Heart left ventricle (tissue), 16 donors: ENCODE measurements at regions of chr17 and their contacts with region 1.

Region 1: DNA sequence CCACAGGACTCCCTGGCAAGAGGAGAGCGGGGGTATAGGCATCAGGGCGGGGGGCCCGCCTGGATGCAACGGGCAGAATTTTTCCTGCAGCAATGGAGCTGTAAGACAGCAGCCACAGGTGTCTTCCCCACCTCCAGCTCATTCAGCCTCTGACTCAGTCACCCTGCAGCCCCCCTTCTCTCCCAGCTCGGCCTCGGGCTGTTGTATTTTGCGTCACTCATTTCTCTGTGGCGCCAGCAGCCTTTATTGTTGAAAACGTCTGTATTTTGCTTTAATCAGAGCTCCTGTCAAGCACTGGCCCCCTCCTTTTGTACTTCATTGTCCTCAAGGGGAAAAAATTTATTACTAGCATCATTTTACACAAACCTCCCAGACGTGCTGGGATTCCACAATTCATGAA is 117.7 kb downstream of the WSCD1 start:
- DNase-seq: no peak
- ATAC-seq: no peak
- H3K4me3 ChIP-seq: no peak overlapping the region
- H3K27ac ChIP-seq: no peak overlapping the region
- H3K4me1 ChIP-seq: no peaks in the 10 kb centered on the region
- H3K27me3 ChIP-seq: peaks cover 0 to 12% (median 0%) of the 10 kb centered on the region in 9 donors
- CTCF ChIP-seq: no peak
- POLR2A ChIP-seq: no peak

Region 2: DNA sequence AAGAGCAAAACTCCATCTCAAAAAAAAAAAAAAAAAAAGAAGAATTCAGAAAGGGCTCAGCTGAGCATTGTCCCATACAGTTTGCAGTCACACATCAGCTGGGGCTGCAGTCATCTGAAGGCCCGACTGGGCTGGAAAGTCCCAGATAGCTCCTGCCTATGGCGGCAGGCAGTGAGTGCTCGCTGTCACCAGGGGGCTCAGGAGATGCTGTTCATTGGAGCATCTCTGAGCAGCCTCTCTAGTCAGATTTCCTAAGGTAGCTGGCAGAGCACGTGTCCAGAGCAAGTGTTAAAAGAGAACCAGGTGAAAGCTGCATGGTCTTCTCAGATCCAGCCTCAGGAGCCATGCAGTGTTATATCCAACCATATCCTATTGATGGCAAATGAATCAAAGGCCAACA is 41.9 kb before region 1 on chr17:
- intact Hi-C with region 1: loop called in 1 of 10 experiments (anchors 10 kb)
- DNase-seq: no peak
- ATAC-seq: no peak
- H3K4me3 ChIP-seq: no peak overlapping the region
- H3K27ac ChIP-seq: no peak overlapping the region
- H3K4me1 ChIP-seq: no peaks in the 10 kb centered on the region
- H3K27me3 ChIP-seq: peaks cover 0 to 4% (median 0%) of the 10 kb centered on the region in 9 donors
- CTCF ChIP-seq: no peak
- POLR2A ChIP-seq: no peak

Region 3: DNA sequence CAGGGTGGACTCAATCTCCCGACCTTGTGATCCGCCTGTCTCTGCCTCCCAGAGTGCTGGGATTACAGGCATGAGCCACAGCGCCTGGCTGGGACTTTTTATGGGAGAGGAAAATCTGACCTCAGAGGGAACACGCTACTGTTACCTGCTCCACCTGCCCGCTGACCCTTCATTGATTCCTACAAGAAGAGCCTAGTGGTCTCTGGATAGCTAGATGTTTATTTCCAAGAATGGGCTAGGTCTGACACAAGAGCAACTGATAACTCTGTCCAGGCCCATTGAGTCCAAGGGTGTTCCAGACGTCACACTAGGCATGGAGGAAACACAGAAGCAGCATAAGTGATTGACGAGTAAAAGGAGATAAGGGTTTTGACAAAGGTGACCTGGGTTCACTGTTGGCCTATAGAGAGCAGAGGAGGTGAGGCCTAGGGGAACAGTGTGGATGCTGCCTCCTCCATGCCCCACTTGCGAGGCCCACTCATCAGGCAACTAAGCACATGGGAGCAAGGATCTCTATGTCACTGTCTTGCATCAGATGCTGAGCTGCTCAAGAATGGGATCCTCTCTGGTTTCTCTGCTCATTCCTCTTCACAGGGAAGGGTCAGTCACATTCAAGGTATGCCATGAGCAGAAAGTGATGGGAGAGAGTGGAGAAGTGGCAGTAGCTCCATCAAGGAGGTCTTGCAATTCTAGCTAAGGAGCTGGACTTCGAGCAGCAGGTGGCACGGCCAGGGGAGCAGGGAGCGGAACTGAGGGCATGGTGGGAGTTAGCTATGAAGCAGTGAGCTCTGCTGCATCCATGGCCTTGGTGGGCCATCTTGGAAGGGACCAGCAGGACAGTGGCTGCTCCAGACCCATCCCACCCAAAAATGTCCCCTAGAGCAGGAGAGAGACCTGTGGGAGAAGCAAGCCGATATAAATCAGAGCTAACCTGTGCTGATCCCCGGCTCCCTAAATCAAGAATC is 27.5 kb after region 1 on chr17:
- intact Hi-C with region 1: no loop called
- DNase-seq: no peak
- ATAC-seq: no peak
- H3K4me3 ChIP-seq: no peak overlapping the region
- H3K27ac ChIP-seq: no peak overlapping the region
- H3K4me1 ChIP-seq: no peaks in the 10 kb centered on the region
- H3K27me3 ChIP-seq: peaks cover 0 to 7% (median 0%) of the 10 kb centered on the region in 9 donors
- CTCF ChIP-seq: no peak
- POLR2A ChIP-seq: no peak

Region 4: DNA sequence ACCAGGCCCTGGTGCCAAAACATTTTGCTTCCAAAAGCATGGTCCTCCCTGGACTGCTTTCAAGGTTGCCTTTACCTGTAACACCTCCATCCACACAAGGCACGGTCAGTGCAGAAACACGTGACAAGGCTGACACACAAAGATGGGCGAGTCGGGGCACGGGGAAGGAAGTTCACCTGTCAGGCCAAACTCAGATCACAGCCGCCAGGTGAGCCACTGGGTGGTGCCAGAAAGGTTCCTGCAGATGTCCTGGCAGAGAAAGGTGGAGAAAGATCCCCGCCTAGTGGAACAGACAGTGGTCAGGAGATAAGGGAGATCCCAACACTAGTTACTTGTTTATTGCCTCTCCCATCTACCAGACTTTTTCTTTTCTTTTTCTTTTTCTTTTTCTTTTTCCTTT is 91.8 kb after region 1 on chr17:
- intact Hi-C with region 1: loop called in 1 of 10 experiments (anchors 5 kb)
- DNase-seq: no peak
- ATAC-seq: no peak
- H3K4me3 ChIP-seq: no peak overlapping the region
- H3K27ac ChIP-seq: no peak overlapping the region
- H3K4me1 ChIP-seq: no peaks in the 10 kb centered on the region
- H3K27me3 ChIP-seq: peaks cover 0 to 6% (median 0%) of the 10 kb centered on the region in 9 donors
- CTCF ChIP-seq: no peak
- POLR2A ChIP-seq: no peak